ENCODE measurements at regions of chr6 and their contacts with region 1.

Region 1: DNA sequence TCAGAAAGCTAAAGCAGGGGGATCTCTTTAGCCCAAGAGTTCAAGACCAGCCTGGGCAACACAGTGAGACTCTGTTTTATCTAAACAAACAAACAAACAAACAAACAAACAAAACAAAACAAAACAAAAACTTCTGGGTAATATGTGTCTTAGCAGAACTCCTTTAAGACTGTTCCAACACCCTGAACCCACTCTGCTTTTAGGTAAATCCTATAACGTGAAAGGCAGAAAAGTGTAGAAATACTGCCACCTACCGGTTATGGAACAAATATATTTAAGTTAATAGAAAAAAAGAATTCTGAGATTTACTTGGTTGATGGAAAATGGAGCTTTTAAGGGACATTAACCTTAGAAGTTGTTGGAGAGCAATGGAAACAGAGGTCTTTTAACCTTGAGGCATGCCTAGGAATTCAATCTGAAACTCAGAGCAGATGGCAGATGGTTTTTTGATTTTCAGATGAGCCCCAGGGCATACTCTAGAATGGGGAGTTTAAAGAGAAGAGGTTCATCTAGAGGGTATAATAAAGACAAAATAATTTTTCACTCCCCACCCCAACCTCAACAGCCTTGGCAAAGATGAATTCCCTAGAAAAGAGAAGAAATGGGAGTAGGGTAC is 38.5 kb downstream of the SOD2 start:
- DNase-seq: no peak
- ATAC-seq: no peak
- H3K4me3 Mint-ChIP-seq: no peak overlapping the region
- H3K27ac Mint-ChIP-seq: no peak overlapping the region
- H3K4me1 Mint-ChIP-seq: no peaks in the 10 kb centered on the region
- H3K27me3 Mint-ChIP-seq: peaks cover 2% of the 10 kb centered on the region

Region 2: DNA sequence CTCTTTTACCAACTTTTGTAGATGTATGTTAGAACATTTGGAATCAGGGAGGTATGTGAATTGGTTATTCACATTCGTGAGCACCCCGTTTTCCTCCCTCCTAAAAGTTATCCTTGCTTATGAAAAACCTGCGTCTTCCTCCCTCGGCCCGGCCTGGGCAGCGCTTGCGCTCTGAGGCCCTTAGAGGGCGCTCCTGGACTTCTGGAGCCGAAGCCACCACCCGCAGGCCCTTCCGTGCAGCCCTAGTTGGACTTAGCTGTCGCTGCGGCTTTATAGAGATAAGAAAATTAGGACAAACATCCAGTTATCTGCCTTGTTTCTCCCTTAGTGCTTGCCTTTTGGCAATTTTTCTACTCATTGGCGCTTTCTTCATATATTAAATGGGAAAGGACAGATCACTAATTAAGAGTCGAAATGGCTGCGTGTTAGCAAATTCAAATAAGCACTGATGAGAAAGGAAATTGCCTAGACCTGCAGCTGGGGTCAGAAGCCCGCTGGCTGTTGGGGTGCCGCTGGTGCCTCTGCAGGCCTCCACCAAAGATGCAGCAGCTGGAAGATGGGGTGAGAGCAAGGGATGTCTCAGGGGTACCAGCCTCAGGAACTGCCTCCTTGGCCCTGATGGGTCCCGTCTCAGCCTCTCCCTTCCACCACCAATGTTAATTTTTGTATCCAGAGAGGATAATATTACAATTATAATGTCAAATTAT is 480.2 kb before region 1 on chr6:
- CTCF ChIA-PET with region 1: interaction called, 57 read pairs
- DNase-seq: peak; percentile 79
- ATAC-seq: peak; percentile 84
- H3K4me3 Mint-ChIP-seq: no peak overlapping the region
- H3K27ac Mint-ChIP-seq: no peak overlapping the region
- H3K4me1 Mint-ChIP-seq: peaks cover 8% of the 10 kb centered on the region
- H3K27me3 Mint-ChIP-seq: peaks cover 63% of the 10 kb centered on the region

Region 3: GRCh38 chr6:159633196-159633595 is 21.4 kb before region 1 on chr6:
- CTCF ChIA-PET with region 1: interaction called, 15 read pairs
- DNase-seq: no peak
- ATAC-seq: no peak
- H3K4me3 Mint-ChIP-seq: no peak overlapping the region
- H3K27ac Mint-ChIP-seq: no peak overlapping the region
- H3K4me1 Mint-ChIP-seq: no peaks in the 10 kb centered on the region
- H3K27me3 Mint-ChIP-seq: no peaks in the 10 kb centered on the region

Measured in activated CD8-positive, alpha-beta memory T cell treated with anti-CD3 and anti-CD28 coated beads, Interleukin-2, amount 10 ng/mL, durations not matched to agents 7 days and 5 days (primary cell).